Activated naive CD4-positive, alpha-beta T cell treated with anti-CD3 and anti-CD28 coated beads for 36 hours (primary cell): ENCODE measurements at regions of chr12 and their contacts with region 1.

Region 1: DNA sequence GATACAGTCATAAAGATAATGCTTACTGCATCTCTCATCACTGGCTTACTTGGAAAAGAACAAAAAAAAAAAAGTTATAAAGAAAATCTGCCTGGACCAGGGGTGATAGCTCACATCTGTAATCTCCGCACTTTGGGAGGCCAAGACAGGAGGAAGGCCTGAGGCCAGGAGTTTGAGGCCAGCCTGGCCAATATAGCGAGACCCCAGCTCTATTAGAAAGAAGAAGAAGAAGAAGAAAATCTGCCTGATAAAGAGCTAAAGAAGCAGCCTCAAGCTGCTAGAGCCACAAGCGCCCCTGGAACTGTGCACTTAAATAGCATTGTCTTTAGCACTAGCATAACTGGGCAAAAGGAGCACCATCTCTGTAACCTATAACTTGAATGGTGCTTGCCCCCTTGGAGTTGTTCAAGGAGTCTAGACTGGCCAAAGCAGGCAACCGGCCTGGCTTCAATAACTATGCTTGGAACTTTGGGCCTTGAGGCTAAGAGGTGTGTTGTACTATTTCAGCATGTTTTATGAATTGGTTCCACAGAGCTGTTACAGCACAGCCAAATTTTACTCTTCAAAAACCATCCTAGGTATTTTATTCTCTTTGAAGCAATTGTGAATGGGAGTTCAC is 53.2 kb downstream of the SINHCAF start:
- DNase-seq: no peak
- H3K4me3 Mint-ChIP-seq: no peak overlapping the region
- H3K27ac Mint-ChIP-seq: no peak overlapping the region
- H3K4me1 Mint-ChIP-seq: no peaks in the 10 kb centered on the region
- H3K27me3 Mint-ChIP-seq: no peaks in the 10 kb centered on the region

Region 2: DNA sequence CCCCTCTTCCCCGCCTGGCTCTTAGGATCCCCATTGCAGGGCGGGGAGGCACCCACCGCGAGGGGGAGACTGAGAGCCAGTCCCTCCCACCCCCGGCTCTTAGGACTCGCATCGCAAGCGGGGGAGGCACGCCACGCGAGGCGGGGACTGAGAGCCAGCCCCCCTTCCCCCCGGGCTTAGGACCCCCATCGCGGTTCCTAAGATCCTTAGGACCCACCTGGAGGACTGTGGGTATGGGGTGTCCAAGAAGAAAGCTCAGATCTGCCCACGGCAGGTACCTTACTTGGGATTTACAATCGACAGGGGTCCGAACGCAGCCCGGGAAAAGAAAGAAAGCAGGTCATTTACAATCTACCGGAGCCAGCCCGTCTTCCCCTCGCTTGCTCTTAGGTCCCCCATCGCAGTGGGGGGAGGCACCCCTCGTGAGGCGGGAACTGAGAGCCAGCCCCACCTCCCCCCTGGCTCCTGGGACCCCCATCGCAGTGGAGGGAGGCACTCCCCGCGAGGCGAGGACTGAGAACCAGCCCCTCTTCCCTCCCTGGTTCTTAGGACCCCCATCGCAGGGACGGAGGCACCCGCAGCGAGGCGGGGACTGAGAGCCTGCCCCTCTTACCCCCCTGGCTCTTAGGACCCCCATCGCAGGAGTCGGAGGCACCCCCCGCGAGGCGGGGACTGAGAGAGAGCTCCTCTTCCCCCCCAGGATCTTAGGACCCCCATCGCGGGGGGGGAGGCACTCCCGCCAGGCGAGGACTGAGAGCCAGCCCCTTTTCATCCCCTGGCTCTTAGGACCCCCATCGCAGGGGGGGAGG is 155.3 kb before region 1 on chr12:
- CTCF ChIA-PET with region 1: no interaction called
- intact Hi-C with region 1: loop called (anchors 1 kb)
- DNase-seq: peak; percentile 66
- H3K4me3 Mint-ChIP-seq: peak overlapping the region; percentile 64
- H3K27ac Mint-ChIP-seq: no peak overlapping the region
- H3K4me1 Mint-ChIP-seq: peaks cover 15% of the 10 kb centered on the region
- H3K27me3 Mint-ChIP-seq: peaks cover 17% of the 10 kb centered on the region

Region 3: GRCh38 chr12:31238764-31239387 is 33.8 kb before region 1 on chr12:
- CTCF ChIA-PET with region 1: interaction called, 16 read pairs
- intact Hi-C with region 1: no loop called
- DNase-seq: peak; percentile 90
- H3K4me3 Mint-ChIP-seq: no peak overlapping the region
- H3K27ac Mint-ChIP-seq: no peak overlapping the region
- H3K4me1 Mint-ChIP-seq: no peaks in the 10 kb centered on the region
- H3K27me3 Mint-ChIP-seq: peaks cover 21% of the 10 kb centered on the region

Region 4: GRCh38 chr12:31245822-31246469 is 26.8 kb before region 1 on chr12:
- CTCF ChIA-PET with region 1: interaction called, 18 read pairs
- intact Hi-C with region 1: no loop called
- DNase-seq: no peak
- H3K4me3 Mint-ChIP-seq: no peak overlapping the region
- H3K27ac Mint-ChIP-seq: no peak overlapping the region
- H3K4me1 Mint-ChIP-seq: no peaks in the 10 kb centered on the region
- H3K27me3 Mint-ChIP-seq: no peaks in the 10 kb centered on the region

Region 5: GRCh38 chr12:31297572-31298512 is 25.1 kb after region 1 on chr12:
- CTCF ChIA-PET with region 1: interaction called, 17 read pairs
- intact Hi-C with region 1: no loop called
- DNase-seq: no peak
- H3K4me3 Mint-ChIP-seq: no peak overlapping the region
- H3K27ac Mint-ChIP-seq: peak overlapping the region; percentile 83
- H3K4me1 Mint-ChIP-seq: peaks cover 35% of the 10 kb centered on the region
- H3K27me3 Mint-ChIP-seq: no peaks in the 10 kb centered on the region

Region 6: GRCh38 chr12:31362759-31363415 is 90.2 kb after region 1 on chr12:
- CTCF ChIA-PET with region 1: interaction called, 13 read pairs
- intact Hi-C with region 1: loop called (anchors 2 kb)
- DNase-seq: peak; percentile 53
- H3K4me3 Mint-ChIP-seq: peak overlapping the region; percentile 38
- H3K27ac Mint-ChIP-seq: no peak overlapping the region
- H3K4me1 Mint-ChIP-seq: peaks cover 14% of the 10 kb centered on the region
- H3K27me3 Mint-ChIP-seq: no peaks in the 10 kb centered on the region